Natural killer cell (primary cell): ENCODE measurements at regions of chr1 and their contacts with region 1.

Region 1: GRCh38 chr1:32981003-32981901 is 16.6 kb upstream of the RNF19B start:
- DNase-seq: peak; percentile 45 to 88
- ATAC-seq: peak; percentile 98 to 99 (median 98)
- H3K4me3 ChIP-seq: peak overlapping the region; percentile 27
- H3K4me3 Mint-ChIP-seq: peak overlapping the region; percentile 67
- H3K27ac ChIP-seq: peak overlapping the region; percentile 96
- H3K27ac Mint-ChIP-seq: peak overlapping the region; percentile 90
- H3K4me1 ChIP-seq: peaks cover 39% of the 10 kb centered on the region
- H3K4me1 Mint-ChIP-seq: peaks cover 14 to 20% of the 10 kb centered on the region in 2 donors
- H3K27me3 ChIP-seq: no peaks in the 10 kb centered on the region
- H3K27me3 Mint-ChIP-seq: no peaks in the 10 kb centered on the region
- CTCF ChIP-seq: no peak

Region 2: DNA sequence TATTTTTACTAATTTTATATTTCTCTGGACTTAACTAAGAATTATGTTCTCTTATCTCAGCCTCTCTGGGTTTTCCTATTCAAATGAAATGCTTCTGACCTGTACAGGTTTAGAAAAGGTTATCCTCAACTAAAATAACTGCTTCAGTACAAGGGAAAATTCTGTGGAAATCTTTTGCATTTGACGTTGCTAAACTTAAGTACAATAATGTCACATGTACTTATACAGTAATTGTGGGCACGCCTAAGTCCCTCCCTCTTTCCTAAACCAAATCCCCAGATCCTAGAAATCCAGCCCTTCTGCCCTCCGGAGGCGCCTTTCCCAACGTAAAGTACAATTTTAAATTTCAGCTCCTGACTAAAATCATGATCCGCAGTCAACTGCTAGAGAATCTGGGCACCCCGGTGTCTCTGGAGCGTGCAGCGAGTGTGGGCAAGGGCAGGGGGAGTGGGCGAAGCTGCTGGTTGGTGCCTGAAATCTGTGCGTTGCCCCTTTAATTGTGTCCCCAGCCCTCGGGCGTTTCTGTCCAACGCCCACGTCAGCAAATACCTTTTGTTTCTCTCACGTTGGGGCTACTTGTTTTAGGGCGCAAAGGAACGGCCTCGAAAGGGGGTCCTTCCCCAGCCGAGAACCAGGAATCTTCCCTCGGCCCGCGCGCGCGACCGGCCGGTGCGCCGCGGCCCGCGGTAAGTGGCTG is 442.2 kb before region 1 on chr1 and contains the start of gene ZBTB8A:
- intact Hi-C with region 1: no loop called
- DNase-seq: peak in 1 of 2 donors; percentile 19
- ATAC-seq: peak in 2 of 3 donors; percentile 21 to 50
- H3K4me3 ChIP-seq: peak within 1 kb of the TSS; percentile 18
- H3K4me3 Mint-ChIP-seq: peak within 1 kb of the TSS; percentile 92
- H3K27ac ChIP-seq: no peak within 1 kb of the TSS
- H3K27ac Mint-ChIP-seq: peak within 1 kb of the TSS in 1 of 2 donors; percentile 36
- H3K4me1 ChIP-seq: peaks cover 11% of the 10 kb centered on the region
- H3K4me1 Mint-ChIP-seq: peaks cover 6 to 11% of the 10 kb centered on the region in 2 donors
- H3K27me3 ChIP-seq: peaks cover 32% of the 10 kb centered on the region
- H3K27me3 Mint-ChIP-seq: peaks cover 36 to 45% of the 10 kb centered on the region in 2 donors
- CTCF ChIP-seq: no peak
- total RNA-seq, gene ZBTB8A: 0.16 to 0.50 (median 0.33) TPM

Region 3: GRCh38 chr1:32964461-32965250 is 16.6 kb before region 1 on chr1 and contains the start of gene RNF19B:
- intact Hi-C with region 1: loop called (anchors 1 kb)
- DNase-seq: peak; percentile 90 to 96
- ATAC-seq: peak; percentile 90 to 98 (median 92)
- H3K4me3 ChIP-seq: peak within 1 kb of the TSS; percentile 67
- H3K4me3 Mint-ChIP-seq: peak within 1 kb of the TSS; percentile 92
- H3K27ac ChIP-seq: peak within 1 kb of the TSS; percentile 80
- H3K27ac Mint-ChIP-seq: peak within 1 kb of the TSS; percentile 90 to 91
- H3K4me1 ChIP-seq: peaks cover 18% of the 10 kb centered on the region
- H3K4me1 Mint-ChIP-seq: peaks cover 36 to 40% of the 10 kb centered on the region in 2 donors
- H3K27me3 ChIP-seq: no peaks in the 10 kb centered on the region
- H3K27me3 Mint-ChIP-seq: peaks cover 0 to 10% of the 10 kb centered on the region in 2 donors
- CTCF ChIP-seq: no peak
- total RNA-seq, gene RNF19B: 44.2 to 110 (median 54.3) TPM

Region 4: GRCh38 chr1:33280091-33280661 is 298.9 kb after region 1 on chr1:
- intact Hi-C with region 1: no loop called
- DNase-seq: no peak
- ATAC-seq: no peak
- H3K4me3 ChIP-seq: no peak overlapping the region
- H3K4me3 Mint-ChIP-seq: no peak overlapping the region
- H3K27ac ChIP-seq: no peak overlapping the region
- H3K27ac Mint-ChIP-seq: no peak overlapping the region
- H3K4me1 ChIP-seq: peaks cover 9% of the 10 kb centered on the region
- H3K4me1 Mint-ChIP-seq: peaks cover 2 to 8% of the 10 kb centered on the region in 2 donors
- H3K27me3 ChIP-seq: no peaks in the 10 kb centered on the region
- H3K27me3 Mint-ChIP-seq: no peaks in the 10 kb centered on the region
- CTCF ChIP-seq: no peak